ENCODE measurements at regions of chr19 and their contacts with region 1.

Region 1: DNA sequence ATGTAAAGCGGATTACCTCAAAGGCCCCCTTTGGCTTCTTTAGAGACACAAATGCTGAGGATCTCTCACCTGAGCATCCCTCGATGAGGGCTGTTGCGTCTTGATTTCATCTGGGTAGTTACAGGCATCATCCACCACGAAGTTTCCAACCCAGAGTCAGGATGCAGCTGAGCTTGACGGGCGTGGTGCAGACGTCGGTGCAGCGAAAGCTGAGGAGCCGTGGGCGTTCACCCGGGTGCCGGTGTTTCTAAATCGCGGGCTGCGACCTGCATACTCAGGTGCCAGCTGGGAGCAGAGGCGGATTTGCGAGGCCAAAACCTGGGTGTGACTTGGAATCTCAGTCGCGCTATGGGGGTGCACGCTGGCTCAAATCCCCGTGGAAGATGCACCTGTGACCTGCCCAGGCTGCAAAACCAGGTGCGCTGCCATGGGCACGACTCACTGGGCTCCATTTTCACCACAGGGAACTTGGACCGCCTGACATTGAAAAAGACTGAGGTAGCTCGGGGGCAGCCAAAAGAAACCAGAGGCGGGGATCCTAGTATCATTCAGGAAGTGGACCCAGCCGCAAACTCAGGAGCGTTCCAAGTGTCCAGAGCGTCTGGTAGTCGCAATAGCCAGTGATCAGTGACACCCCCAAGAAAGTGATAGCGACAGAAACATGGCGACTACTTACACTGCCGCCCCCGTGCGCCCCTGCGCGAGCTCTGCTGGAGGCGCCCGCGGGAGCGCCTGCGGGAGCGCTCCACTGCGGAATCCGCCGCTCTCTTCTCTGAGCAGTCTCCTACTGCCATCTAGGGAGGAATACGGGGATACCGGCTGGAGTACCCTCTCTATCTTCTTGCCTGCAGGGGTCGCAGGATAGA is 36.4 kb upstream of the IGFL4 start:
- DNase-seq: peak; percentile 73 to 74
- H3K4me3 ChIP-seq: peak overlapping the region; percentile 55
- H3K27ac ChIP-seq: no peak overlapping the region
- H3K4me1 ChIP-seq: peaks cover 38% of the 10 kb centered on the region
- H3K27me3 ChIP-seq: no peaks in the 10 kb centered on the region
- CTCF ChIP-seq: peak; percentile 99

Region 2: GRCh38 chr19:45817010-45817724 is 260.0 kb before region 1 on chr19:
- CTCF ChIA-PET with region 1: no interaction called
- POLR2A ChIA-PET with region 1: no interaction called
- intact Hi-C with region 1: loop called (anchors 2 kb)
- DNase-seq: peak; percentile 86 to 95
- H3K4me3 ChIP-seq: no peak overlapping the region
- H3K27ac ChIP-seq: no peak overlapping the region
- H3K4me1 ChIP-seq: no peaks in the 10 kb centered on the region
- H3K27me3 ChIP-seq: no peaks in the 10 kb centered on the region
- CTCF ChIP-seq: peak; percentile 99

Region 3: GRCh38 chr19:46030812-46031550 is 46.2 kb before region 1 on chr19:
- CTCF ChIA-PET with region 1: interaction called, 20 read pairs
- POLR2A ChIA-PET with region 1: no interaction called
- intact Hi-C with region 1: loop called (anchors 1 kb)
- DNase-seq: no peak
- H3K4me3 ChIP-seq: no peak overlapping the region
- H3K27ac ChIP-seq: no peak overlapping the region
- H3K4me1 ChIP-seq: no peaks in the 10 kb centered on the region; the same call in 1 of the 2 replicates
- H3K27me3 ChIP-seq: no peaks in the 10 kb centered on the region
- CTCF ChIP-seq: no peak

Region 4: DNA sequence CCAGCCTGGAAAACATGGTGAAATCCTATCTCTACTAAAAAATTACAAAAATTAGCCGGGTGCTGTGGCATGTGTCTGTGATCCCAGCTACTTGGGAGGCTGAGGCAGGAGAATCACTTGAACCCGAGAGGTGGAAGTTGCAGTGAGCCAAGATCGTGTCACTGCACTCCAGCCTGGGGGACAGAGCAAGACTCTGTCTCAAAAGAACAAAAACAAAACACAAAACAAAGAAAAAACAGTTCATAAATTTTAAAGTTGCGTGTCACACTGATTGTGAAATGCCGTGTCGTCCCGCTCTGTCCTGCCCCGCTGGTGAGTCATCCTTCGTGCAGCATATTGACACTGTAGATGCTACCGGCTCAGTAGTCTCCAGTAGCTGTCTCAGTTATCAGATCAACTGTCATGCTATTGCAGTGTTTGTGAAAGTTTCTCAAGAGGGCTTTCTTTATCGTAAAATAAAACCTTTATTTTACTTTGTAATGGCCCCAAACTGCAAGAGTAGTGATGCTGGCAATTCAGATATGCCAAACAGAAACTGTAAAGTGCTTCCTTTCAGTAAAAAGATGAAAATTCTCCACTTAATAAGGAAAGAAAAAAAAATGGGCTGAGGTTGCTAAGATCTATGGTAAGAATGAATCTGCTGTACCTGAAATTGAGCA is 115.9 kb after region 1 on chr19:
- CTCF ChIA-PET with region 1: interaction called, 12 read pairs
- POLR2A ChIA-PET with region 1: interaction called, 3 read pairs
- intact Hi-C with region 1: loop called (anchors 1 kb)
- DNase-seq: peak; percentile 74 to 94
- H3K4me3 ChIP-seq: no peak overlapping the region; the same call in 1 of the 2 replicates
- H3K27ac ChIP-seq: peak overlapping the region; percentile 82
- H3K4me1 ChIP-seq: peaks cover 63% of the 10 kb centered on the region
- H3K27me3 ChIP-seq: no peaks in the 10 kb centered on the region
- CTCF ChIP-seq: no peak

Region 5: DNA sequence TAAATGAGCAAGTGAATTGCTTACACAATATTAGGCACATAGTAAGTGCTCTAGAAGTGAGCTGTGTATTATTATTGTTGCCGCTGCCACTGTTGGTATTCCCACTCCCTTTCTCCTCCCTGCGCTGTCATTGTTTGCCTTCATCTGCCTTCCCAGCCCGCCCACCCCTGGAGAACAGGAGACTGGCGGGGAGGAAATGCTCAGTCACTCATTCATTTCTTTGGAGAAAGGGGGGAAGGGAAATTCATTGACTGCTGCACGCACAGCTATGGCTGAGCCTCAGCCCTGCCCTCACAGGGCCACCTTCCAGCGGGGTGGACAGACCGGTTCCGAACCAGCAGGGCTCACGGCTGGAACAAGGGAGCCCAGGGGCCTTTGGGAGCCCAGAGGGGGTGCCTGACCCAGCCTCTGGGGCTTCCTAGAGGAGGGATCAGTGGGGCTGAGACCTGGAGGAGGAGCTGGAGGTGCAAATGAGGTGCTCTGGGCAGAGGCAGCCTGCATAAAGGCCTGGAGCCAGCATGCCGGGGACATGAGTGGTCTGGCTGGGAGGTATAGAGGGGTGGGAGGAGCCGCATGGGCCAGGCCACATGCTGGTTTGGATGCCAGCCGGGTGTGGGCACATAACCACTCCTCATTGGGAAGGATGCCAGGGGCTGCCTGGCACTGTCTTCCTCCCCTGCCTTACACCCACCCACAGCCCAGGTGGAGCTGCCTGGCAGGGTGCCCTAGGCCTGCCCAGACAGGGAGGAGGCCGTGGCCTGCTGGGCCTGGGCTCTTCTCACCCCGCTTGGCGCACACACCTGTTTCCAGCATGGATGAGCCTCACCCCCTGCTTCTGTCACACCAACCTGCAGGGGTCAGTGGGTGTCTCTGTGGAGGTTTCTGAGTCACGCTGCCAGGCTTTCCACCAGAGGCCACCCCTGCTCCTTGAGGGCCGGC is 296.5 kb after region 1 on chr19:
- CTCF ChIA-PET with region 1: no interaction called
- POLR2A ChIA-PET with region 1: no interaction called
- intact Hi-C with region 1: loop called (anchors 10 kb)
- DNase-seq: peak; percentile 99
- H3K4me3 ChIP-seq: peak overlapping the region; percentile 21; the same call in 1 of the 2 replicates
- H3K27ac ChIP-seq: peak overlapping the region; percentile 92
- H3K4me1 ChIP-seq: peaks cover 55% of the 10 kb centered on the region
- H3K27me3 ChIP-seq: no peaks in the 10 kb centered on the region
- CTCF ChIP-seq: peak; percentile 42; the same call in 1 of the 2 replicates